WTC11 (cell line): ENCODE measurements at regions of chr12 and their contacts with region 1.

Region 1: GRCh38 chr12:54379401-54380201 is 4.9 kb downstream of the ZNF385A start:
- DNase-seq: peak; percentile 98
- ATAC-seq: peak; percentile 82
- H3K4me3 Mint-ChIP-seq: peak overlapping the region; percentile 72
- H3K27ac Mint-ChIP-seq: peak overlapping the region; percentile 88; the same call in 1 of the 2 replicates
- H3K4me1 Mint-ChIP-seq: peaks cover 24% of the 10 kb centered on the region
- H3K27me3 Mint-ChIP-seq: peaks cover 10% of the 10 kb centered on the region
- CTCF ChIP-seq: peak; percentile 98

Region 2: DNA sequence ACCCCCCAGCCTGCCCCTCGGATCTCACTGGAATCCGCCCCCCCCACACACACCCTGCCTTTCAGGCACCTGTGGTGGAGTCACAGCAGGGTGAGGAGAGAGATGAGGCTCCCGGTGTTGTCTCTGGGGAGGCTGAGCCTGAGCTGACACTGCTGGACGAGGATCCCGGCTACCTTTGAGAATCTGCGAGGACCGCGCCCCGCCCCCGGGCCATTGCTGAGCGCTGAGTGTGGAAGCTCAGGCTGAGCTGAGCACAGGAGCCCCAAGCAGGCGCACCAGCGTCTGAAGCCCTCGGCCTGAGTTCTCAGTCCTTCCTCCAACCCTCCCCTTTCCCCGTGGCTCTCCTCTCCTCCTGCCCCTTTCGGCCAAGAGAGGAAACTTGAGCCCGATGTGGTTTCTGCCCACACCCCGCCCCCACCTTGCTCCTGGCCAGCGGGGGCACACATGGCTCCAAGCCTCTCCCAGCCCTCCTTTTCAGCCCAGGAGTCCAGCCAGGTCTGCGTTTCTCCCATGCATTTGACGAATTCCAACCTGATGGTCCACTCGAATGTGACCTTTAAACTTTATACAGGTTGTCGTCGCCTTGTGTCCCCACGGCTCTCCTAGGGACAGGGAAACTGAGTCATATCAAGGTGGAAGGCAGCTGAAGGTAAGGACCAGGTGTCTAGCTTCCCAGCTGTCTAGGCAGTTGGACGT is 78.7 kb before region 1 on chr12 and contains the start of gene NFE2:
- CTCF ChIA-PET with region 1: interaction called, 12 read pairs
- POLR2A ChIA-PET with region 1: no interaction called
- DNase-seq: peak; percentile 86
- ATAC-seq: peak; percentile 94
- H3K4me3 Mint-ChIP-seq: peak within 1 kb of the TSS; percentile 68
- H3K27ac Mint-ChIP-seq: peak within 1 kb of the TSS; percentile 90
- H3K4me1 Mint-ChIP-seq: peaks cover 53% of the 10 kb centered on the region
- H3K27me3 Mint-ChIP-seq: peaks cover 15% of the 10 kb centered on the region
- CTCF ChIP-seq: no peak
- total RNA-seq, gene NFE2: 2.4 to 3.0 TPM (median 3.0 TPM) in 3 replicates

Region 3: DNA sequence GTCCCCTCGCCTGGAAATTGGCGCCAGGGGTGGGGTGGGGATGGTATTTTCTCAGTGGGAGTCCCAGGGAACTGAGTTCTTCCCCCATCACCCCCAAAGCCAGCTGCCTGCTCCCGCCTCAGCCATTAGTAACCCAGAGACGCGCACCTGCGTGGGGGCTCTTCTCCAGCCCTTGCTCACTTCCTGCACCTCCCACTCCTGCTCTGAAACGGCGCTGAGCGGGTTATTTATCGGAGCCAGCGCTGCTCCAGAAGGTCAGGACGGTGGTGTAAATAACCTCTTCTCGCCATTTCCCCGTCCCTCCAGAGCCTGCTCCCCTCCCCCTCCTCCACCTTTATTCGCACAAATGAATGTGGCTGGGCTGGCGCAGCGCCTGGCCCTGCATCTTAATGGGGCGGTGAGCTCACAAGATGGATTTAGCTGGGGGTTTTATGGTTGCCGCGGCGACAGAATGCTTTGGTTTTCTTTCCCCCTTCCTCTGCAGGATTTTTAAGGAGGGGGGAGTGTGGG is 27.5 kb before region 1 on chr12:
- CTCF ChIA-PET with region 1: interaction called, 48 read pairs
- POLR2A ChIA-PET with region 1: no interaction called
- DNase-seq: peak; percentile 70
- ATAC-seq: peak; percentile 55
- H3K4me3 Mint-ChIP-seq: peak overlapping the region; percentile 87
- H3K27ac Mint-ChIP-seq: peak overlapping the region; percentile 92
- H3K4me1 Mint-ChIP-seq: peaks cover 47% of the 10 kb centered on the region
- H3K27me3 Mint-ChIP-seq: peaks cover 18% of the 10 kb centered on the region
- CTCF ChIP-seq: no peak

Region 4: DNA sequence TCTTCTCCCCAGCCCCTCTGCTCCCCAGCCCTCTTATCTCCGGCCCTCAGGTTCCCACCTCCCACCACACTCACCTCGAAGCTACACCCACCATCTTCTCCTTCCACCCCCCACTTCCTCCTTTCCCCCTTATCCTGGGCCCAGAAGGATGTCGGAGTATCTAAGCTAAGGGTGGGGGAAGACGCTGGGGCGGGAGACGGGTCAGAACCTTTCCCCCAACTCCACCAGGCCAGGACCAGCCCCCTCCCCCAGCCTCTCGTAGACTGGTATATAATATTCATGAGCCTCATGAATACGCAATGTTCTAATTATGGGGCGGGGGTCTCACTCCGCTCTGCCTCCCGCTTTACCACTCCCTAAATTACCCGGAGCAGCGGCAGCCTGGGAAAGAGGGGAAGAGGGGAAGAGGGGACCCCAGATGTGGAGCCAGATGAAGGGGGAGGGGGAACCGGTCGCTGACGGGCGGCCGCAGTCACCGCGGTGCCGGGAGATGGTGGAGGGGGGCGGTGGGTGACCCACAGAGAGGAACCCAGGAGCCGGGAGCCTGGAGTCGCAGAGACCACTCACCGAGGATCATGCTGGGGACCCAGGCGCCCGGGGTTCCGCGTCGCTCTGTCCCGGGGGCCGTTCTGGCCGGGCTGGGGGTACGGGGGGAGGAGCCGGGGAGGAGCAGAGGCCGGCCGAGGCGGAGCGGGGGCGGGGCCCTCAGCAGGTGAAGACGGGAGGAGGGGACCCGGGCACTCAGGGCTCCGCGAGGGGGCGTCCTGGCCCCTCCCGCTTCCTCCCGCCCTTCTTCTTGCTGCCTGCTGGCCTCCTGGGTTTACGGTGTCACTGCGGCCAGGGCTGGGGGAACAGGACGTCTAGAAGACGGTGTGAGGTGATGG is 11.3 kb after region 1 on chr12:
- CTCF ChIA-PET with region 1: interaction called, 65 read pairs
- POLR2A ChIA-PET with region 1: interaction called, 10 read pairs
- DNase-seq: peak; percentile 85
- ATAC-seq: peak; percentile 69
- H3K4me3 Mint-ChIP-seq: peak overlapping the region; percentile 83
- H3K27ac Mint-ChIP-seq: no peak overlapping the region
- H3K4me1 Mint-ChIP-seq: peaks cover 68% of the 10 kb centered on the region
- H3K27me3 Mint-ChIP-seq: peaks cover 19% of the 10 kb centered on the region
- CTCF ChIP-seq: no peak

Region 5: GRCh38 chr12:54431911-54432814 is 52.6 kb after region 1 on chr12:
- CTCF ChIA-PET with region 1: interaction called, 14 read pairs
- POLR2A ChIA-PET with region 1: no interaction called
- DNase-seq: peak; percentile 60
- ATAC-seq: peak; percentile 63
- H3K4me3 Mint-ChIP-seq: peak overlapping the region; percentile 5; the same call in 1 of the 2 replicates
- H3K27ac Mint-ChIP-seq: no peak overlapping the region
- H3K4me1 Mint-ChIP-seq: peaks cover 43% of the 10 kb centered on the region
- H3K27me3 Mint-ChIP-seq: peaks cover 94% of the 10 kb centered on the region
- CTCF ChIP-seq: no peak

Region 6: GRCh38 chr12:54486173-54486867 is 106.7 kb after region 1 on chr12:
- CTCF ChIA-PET with region 1: no interaction called
- POLR2A ChIA-PET with region 1: no interaction called
- DNase-seq: no peak
- ATAC-seq: no peak
- H3K4me3 Mint-ChIP-seq: no peak overlapping the region
- H3K27ac Mint-ChIP-seq: no peak overlapping the region
- H3K4me1 Mint-ChIP-seq: no peaks in the 10 kb centered on the region
- H3K27me3 Mint-ChIP-seq: peaks cover 27% of the 10 kb centered on the region
- CTCF ChIP-seq: no peak